Right ventricle myocardium inferior (tissue), 1 donor: ENCODE measurements at regions of chr17 and their contacts with region 1.

Region 1: DNA sequence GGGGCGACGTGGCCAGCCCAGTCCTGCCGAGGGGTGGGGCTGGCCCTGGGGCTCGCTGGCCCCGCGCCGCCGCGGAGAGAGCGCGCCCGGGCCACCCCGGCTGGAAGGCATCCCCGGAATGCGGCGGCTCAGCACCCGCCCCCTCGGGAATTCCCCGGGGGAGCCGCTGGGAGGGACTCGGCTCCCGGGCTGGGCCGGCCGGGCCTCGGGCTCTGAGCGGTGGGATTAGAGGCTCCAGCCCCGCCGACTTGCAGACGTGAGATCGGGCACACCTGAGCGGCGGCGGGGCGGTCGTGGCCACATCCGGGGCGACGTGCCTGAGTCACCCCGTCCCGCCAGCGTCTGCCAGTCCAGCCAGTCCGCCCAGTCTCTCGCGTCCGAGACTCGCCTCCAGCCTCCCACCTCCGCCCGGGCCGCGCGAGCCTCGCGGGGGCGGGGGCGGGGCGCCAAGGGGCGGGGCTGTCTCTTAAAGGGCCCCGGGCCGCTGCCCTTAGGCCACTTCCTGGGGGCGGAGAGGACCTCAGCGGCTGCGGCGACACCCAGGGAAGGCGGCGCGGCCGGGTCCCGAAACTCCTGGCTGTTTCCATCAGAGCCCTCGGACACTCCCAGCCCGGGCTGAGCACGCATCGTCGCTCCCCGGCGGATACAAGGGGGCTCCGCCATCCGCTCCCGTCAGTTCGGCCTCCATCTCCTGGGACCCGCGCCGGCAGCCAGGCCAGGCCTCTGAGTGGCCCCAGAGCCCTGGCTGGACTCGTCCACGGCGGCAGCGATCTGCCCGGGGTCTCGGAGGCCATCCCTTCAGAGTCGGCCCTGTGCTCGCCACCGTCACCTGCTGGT is at the start of gene KCTD11:
- DNase-seq: peak; percentile 96
- ATAC-seq: peak; percentile 81
- total RNA-seq, gene KCTD11: 4.7 TPM

Region 2: DNA sequence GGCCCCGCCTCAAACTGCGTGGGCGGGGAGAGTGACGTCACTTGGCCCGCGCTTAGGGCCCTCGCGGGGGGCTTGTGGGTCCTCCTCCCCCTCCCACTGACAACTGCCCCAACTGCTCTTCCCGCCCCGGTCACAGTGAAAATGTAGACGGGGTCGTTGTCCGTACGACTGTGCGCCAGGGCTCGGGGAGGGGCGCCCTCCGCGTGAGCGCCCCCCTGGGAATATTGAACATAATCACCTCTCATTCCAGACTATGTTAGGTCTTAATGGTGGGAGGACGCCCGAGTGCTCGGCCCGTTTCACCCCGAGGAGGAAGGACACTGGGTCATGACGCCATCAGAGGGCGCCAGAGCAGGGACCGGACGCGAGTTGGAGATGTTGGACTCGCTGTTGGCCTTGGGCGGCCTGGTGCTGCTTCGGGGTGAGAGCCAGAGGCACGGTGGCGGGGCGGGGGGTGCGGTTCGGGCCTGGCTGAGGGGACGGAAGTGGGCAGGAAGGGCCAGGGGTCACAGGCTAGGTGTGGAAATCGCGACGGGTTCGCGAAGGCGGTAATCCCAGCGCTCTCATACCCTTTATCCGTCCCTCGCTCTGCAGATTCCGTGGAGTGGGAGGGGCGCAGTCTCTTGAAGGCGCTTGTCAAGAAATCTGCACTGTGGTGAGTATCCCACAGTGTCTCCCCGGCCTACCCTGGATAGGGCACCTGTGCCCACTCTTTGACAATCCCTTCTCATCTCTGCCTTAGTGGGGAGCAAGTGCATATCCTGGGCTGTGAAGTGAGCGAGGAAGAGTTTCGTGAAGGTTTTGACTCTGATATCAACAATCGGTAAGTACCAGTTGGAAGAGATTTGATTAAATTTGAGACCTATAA is 99.5 kb before region 1 on chr17 and contains the start of gene ELP5:
- intact Hi-C with region 1: loop called (anchors 5 kb)
- DNase-seq: peak; percentile 97
- ATAC-seq: peak; percentile 78
- total RNA-seq, gene ELP5: 72.7 TPM

Region 3: GRCh38 chr17:7306911-7307686 is 44.8 kb before region 1 on chr17 and contains the start of gene EIF5A:
- intact Hi-C with region 1: no loop called
- DNase-seq: peak; percentile 100
- ATAC-seq: peak; percentile 96
- total RNA-seq, gene EIF5A: 326 TPM

Region 4: DNA sequence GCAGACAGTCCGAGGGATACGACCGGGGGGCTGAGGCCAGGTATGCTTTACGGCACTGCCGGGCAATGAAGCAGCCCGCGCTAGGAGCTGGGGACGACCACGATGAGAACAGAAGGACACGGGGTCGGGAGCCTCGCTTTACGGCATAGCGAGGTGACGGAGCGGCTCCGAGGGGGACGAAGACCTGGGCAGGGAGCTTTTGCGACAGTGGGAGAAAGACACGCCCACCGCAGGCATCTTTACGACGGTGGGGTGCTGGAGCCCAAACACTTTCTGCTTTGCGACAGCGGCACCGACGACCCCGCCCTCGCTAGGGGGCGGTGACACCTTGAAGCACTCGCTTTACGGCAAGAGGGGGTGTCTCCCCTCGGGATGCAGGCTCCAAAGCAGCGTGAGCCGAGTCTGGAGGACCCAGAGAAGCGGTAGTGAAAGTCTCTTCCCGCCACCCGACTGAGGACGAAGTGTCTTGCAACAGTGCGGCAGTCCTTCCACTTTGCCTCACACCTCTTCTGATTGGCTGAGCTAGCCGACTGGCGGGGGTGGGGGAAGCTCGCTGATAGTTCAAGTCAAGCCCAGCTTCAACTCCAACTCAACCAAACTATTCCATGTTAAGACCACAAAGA is 22.4 kb before region 1 on chr17:
- intact Hi-C with region 1: loop called (anchors 1 kb)
- DNase-seq: peak; percentile 99
- ATAC-seq: peak; percentile 94

Region 5: DNA sequence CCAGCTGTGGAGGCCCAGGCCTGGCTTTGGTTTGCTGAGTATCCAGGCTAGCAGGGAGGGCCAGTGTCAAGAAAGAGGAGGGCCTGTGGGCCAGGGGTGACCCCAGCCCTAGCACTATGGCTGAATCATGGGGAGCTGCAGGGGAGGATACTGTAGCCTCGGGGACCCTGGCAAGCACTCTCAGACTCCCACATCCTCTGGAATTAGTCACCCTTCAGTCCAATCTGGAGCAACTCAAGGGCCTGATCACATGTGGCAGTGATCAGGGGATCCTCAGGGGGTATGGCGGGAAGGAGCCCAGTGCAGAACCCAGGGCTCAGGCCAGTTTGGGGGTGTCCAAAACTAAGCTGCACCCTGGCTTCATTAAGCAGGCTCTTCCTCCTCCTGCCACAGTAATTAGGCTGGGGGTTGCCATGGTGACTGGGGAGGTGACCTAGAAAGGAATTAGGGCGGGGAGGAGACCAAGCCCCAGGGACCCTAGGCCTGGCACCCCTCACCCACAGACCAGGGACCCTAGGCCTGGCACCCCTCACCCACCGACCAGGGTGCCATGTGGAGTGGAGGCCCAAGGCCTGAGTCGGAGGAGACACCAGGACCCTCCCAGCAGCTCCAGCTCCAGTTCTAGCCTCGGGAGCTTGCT is 61.6 kb after region 1 on chr17:
- intact Hi-C with region 1: no loop called
- DNase-seq: no peak
- ATAC-seq: no peak

Region 6: GRCh38 chr17:7435221-7435675 is 83.4 kb after region 1 on chr17 and contains the start of gene TMEM102:
- intact Hi-C with region 1: loop called (anchors 2 kb)
- DNase-seq: peak; percentile 95
- ATAC-seq: peak; percentile 86
- total RNA-seq, gene TMEM102: 2.7 TPM

Region 7: GRCh38 chr17:7561028-7561575 is 209.2 kb after region 1 on chr17:
- intact Hi-C with region 1: loop called (anchors 2 kb)
- DNase-seq: peak; percentile 94
- ATAC-seq: peak; percentile 72